Activated naive CD4-positive, alpha-beta T cell treated with anti-CD3 and anti-CD28 coated beads for 36 hours (primary cell): ENCODE measurements at regions of chr20 and their contacts with region 1.

Region 1: DNA sequence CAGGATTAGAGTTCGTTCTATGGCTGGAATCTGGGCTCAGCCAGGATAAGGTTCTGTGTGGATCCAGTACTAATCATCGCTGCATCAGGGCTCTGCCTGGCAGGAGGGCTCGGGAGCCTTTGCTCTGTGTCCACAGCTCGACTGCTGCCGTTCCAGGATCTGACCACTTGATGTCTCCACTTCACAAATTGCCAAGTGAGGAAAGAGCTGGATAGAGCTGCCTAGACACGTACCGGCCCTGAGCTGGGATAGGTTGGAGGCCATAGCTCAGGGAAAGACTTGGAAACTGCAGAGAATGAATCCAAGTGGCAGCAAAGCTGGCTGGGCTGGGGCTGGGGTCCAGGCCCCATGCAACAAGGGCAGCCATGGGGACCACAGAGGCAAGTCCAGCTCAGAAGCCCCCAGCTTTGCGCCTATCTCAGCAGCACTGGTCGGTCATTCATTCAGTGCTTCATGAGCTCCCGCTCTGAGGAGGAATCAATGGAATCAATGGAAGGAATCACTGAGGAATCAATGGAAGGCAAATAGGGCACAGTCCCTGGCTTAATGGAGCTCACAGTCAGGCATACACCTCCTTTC is 38.0 kb upstream of the TOP1 start:
- DNase-seq: peak; percentile 89
- H3K4me3 Mint-ChIP-seq: no peak overlapping the region
- H3K27ac Mint-ChIP-seq: peak overlapping the region; percentile 72
- H3K4me1 Mint-ChIP-seq: peaks cover 21% of the 10 kb centered on the region
- H3K27me3 Mint-ChIP-seq: no peaks in the 10 kb centered on the region

Region 2: GRCh38 chr20:40606660-40607059 is 384.0 kb before region 1 on chr20:
- CTCF ChIA-PET with region 1: no interaction called
- intact Hi-C with region 1: no loop called
- DNase-seq: no peak
- H3K4me3 Mint-ChIP-seq: no peak overlapping the region
- H3K27ac Mint-ChIP-seq: no peak overlapping the region
- H3K4me1 Mint-ChIP-seq: no peaks in the 10 kb centered on the region
- H3K27me3 Mint-ChIP-seq: peaks cover 7% of the 10 kb centered on the region

Region 3: DNA sequence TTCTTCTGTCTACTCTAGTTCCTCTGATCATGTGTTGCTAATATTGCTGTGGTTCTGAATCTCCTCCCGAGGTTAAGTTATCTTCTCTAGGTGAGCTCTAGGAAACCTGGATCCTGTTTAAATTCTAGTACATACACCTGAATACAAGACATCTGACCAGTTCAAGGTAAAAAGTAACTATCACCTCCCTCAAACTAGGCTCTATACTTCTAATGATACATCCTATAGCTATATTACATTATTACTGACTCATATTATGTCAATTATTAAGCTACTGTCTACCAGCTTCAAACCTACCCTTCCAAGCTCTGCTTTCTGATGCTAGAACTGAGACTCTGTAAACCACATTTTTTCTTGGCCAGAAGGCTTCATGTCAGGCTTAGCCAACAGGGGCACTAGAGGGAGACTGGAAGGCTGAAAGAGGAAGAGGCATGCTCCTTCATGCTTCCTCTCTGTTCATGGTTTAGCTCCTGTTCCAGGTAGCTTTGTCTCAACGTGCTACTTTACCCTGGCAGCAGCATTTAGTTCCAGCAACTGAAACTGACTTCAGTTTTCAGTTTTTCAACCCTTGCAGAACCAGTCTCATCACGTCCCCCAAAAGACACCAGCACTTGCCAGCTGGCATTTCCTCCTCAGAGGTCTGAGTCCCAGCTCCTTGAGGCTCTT is 110.4 kb before region 1 on chr20:
- CTCF ChIA-PET with region 1: no interaction called
- intact Hi-C with region 1: no loop called
- DNase-seq: no peak
- H3K4me3 Mint-ChIP-seq: no peak overlapping the region
- H3K27ac Mint-ChIP-seq: no peak overlapping the region
- H3K4me1 Mint-ChIP-seq: peaks cover 9% of the 10 kb centered on the region
- H3K27me3 Mint-ChIP-seq: no peaks in the 10 kb centered on the region

Region 4: DNA sequence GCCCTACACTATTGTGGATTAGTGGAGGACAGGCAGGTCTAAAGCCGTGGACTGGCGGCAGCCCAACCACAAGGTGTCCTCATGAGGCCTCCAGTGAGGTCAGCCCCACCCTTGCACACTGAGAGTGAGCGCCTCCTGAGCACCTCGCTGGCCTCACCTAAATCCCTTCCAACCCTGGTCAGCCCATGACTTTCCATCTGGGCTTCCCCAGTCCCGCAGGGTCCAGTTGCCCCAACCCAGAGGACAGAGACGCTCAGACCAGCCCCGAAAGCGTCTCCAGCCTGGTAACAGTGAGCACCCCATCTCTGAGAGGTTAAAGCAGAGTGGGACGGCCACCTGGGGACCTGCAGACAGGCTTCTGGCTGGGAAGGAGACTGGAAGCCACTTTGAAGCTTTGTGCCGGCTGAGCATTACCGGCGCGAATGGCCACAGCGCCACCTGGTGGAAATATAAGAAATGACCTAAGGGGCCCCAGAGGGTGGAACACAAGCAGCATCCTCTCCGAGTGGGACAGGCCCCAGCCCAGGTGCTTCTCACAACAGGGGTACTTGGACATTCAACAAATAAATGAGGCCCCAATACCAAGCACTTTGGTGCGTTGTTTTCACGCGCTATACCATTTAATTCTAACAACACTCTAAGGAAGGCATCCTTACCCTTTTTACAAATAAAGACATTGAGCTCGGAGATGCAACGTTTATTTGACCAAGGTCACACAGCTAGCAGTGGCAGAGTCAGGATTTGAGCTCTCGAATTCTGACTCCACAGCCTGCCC is 27.7 kb before region 1 on chr20:
- CTCF ChIA-PET with region 1: interaction called, 29 read pairs
- intact Hi-C with region 1: no loop called
- DNase-seq: peak; percentile 80
- H3K4me3 Mint-ChIP-seq: no peak overlapping the region
- H3K27ac Mint-ChIP-seq: no peak overlapping the region
- H3K4me1 Mint-ChIP-seq: peaks cover 5% of the 10 kb centered on the region
- H3K27me3 Mint-ChIP-seq: no peaks in the 10 kb centered on the region

Region 5: GRCh38 chr20:41003143-41003883 is 12.7 kb after region 1 on chr20:
- CTCF ChIA-PET with region 1: interaction called, 13 read pairs
- intact Hi-C with region 1: loop called (anchors 1 kb)
- DNase-seq: peak; percentile 77
- H3K4me3 Mint-ChIP-seq: peak overlapping the region; percentile 45
- H3K27ac Mint-ChIP-seq: peak overlapping the region; percentile 90
- H3K4me1 Mint-ChIP-seq: peaks cover 22% of the 10 kb centered on the region
- H3K27me3 Mint-ChIP-seq: no peaks in the 10 kb centered on the region

Region 6: GRCh38 chr20:41047975-41048305 is 57.3 kb after region 1 on chr20:
- CTCF ChIA-PET with region 1: interaction called, 20 read pairs
- intact Hi-C with region 1: no loop called
- DNase-seq: no peak
- H3K4me3 Mint-ChIP-seq: peak overlapping the region; percentile 71
- H3K27ac Mint-ChIP-seq: peak overlapping the region; percentile 92
- H3K4me1 Mint-ChIP-seq: peaks cover 84% of the 10 kb centered on the region
- H3K27me3 Mint-ChIP-seq: no peaks in the 10 kb centered on the region

Region 7: GRCh38 chr20:41086402-41087338 is 96.0 kb after region 1 on chr20:
- CTCF ChIA-PET with region 1: interaction called, 229 read pairs
- intact Hi-C with region 1: no loop called
- DNase-seq: no peak
- H3K4me3 Mint-ChIP-seq: no peak overlapping the region
- H3K27ac Mint-ChIP-seq: peak overlapping the region; percentile 42
- H3K4me1 Mint-ChIP-seq: peaks cover 19% of the 10 kb centered on the region
- H3K27me3 Mint-ChIP-seq: no peaks in the 10 kb centered on the region

Region 8: DNA sequence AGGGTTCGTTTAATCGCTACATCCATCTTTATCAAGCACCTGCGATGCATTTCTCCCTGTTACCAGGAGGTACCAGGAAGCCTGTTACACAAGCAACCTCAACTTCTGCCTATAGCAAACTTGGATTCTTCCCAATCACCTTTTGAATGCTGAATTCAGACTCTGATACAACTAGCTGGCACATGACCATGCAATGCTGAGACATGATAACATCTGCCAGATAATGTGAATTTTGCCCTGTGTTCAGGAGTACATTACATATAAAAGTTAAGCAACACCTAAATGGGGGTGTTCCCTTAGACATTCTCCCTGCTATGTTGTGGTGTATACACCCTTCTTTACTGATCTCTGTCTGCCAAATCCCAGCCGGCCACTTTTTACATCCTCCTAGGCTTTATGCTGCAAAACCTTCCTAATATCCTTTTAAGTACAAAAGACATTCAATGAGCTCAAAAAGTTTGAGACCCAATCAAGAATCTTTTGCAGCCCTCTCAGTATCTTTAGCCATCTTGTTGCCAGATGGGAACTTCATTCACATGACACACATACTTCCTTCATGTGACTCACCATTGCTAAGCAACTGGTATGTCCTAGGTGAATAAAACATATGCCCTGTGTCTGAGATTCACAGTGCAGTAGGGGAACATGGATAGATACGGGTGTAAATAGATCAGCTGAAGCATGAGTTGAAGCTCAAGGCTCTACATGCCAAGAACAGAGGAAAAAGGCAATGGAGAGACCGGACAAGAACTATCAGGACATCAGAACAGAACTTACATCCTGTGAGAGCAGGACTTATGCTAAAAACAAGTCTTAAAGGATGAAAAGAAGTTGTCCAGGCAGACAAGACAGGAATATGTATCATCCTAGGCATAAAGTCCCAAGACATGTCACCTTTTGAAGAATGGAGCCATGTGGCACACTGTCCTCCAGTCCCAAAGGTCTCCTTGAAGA is 242.6 kb after region 1 on chr20:
- CTCF ChIA-PET with region 1: interaction called, 3 read pairs
- intact Hi-C with region 1: loop called (anchors 1 kb)
- DNase-seq: no peak
- H3K4me3 Mint-ChIP-seq: no peak overlapping the region
- H3K27ac Mint-ChIP-seq: no peak overlapping the region
- H3K4me1 Mint-ChIP-seq: peaks cover 24% of the 10 kb centered on the region
- H3K27me3 Mint-ChIP-seq: no peaks in the 10 kb centered on the region